Activated CD4-positive, alpha-beta memory T cell treated with anti-CD3 and anti-CD28 coated beads for 36 hours (primary cell): ENCODE measurements at regions of chr10 and their contacts with region 1.

Region 1: DNA sequence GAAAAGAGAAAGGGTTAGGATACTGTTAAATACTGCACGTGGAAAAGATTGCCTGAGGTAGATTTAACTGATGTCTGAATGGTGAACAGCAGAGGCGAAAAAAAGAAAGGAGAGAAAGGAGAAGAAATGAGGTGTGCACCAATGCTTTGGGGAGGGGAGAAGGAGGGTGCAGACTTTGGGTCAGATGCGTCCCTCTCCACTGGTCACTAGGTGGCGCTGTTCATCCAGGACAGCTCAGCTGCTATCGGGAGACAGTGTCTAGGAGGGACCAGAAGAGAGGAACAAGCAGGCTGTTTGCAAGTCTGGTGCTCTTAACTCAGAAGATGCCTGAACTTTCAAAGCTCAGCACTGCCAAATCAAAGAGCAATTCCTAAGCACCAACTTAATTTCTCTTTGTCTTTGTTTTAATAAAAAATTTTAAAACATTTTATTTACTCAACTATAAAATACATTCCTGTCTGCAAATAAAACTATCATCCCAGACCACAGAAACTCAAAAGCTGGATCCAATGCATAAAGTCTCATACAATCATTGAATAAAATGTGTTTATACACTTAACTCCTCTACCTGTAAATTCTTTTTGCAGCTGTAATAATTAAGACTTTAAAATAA is 83.9 kb upstream of the PDLIM1 start:
- DNase-seq: peak; percentile 81
- H3K4me3 Mint-ChIP-seq: no peak overlapping the region
- H3K27ac Mint-ChIP-seq: no peak overlapping the region
- H3K4me1 Mint-ChIP-seq: peaks cover 9% of the 10 kb centered on the region
- H3K27me3 Mint-ChIP-seq: peaks cover 14% of the 10 kb centered on the region

Region 2: DNA sequence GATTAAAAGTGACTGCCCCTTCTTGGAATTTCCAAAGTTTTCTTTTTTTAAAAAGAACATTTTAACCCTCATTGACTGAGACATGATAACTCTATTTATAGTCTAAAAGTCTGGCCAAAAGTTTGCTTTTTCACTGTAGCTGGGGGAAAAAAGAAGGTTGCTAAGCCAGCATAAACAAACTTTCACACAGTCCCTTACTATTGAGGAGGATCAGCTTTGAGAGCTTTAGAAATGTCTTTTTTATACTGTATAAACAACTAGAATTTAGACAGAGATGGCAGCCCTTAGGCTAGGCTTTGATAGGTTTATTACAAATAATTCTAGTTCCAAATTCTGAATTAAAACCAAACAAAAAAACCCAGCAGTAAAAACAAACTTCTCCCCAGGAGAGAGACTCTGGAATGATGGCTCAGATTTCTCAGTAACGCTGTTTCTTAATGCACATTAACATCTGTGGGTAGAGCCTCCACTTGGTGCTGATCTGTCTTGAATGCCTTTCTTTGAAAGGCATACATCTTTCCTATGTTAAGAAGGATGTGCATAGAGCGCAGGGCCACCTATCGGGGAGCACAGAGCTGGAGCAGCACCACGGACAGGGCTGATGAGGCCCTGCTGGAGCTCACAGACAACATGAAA is 17.0 kb after region 1 on chr10:
- CTCF ChIA-PET with region 1: interaction called, 33 read pairs
- POLR2A ChIA-PET with region 1: no interaction called
- intact Hi-C with region 1: no loop called
- DNase-seq: peak; percentile 24
- H3K4me3 Mint-ChIP-seq: no peak overlapping the region
- H3K27ac Mint-ChIP-seq: no peak overlapping the region
- H3K4me1 Mint-ChIP-seq: peaks cover 11% of the 10 kb centered on the region
- H3K27me3 Mint-ChIP-seq: no peaks in the 10 kb centered on the region

Region 3: DNA sequence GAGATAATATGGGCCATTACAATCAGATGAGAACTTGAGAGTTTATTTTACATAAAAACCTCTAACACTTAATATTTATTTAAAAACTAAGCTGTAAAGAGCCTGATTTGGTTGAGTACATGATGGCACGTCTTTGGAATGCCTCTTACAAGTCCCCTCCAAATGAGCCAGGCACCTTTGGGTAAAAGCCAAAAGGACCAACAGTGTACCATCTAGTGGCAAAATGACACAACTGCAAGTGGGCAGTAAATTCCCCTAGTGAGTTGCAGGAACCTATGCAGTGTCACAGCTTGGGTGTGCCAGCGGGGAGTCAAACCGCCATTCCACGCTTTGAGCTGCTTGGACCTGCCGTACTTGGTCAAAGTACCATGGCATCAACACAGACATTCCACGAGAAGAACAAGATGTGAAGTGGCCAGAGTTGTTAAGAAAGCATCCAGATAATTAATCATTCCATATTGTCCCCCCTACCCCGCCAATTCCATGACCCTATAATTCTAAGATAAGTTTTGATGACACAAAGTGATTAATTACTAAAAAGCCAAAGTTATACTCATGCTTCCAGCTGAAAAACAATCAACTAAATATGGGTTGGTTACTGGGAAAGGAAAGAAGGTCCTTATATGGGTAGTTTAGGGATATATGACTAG is 71.3 kb after region 1 on chr10:
- CTCF ChIA-PET with region 1: interaction called, 47 read pairs
- POLR2A ChIA-PET with region 1: no interaction called
- intact Hi-C with region 1: loop called (anchors 1 kb)
- DNase-seq: peak; percentile 34
- H3K4me3 Mint-ChIP-seq: no peak overlapping the region
- H3K27ac Mint-ChIP-seq: no peak overlapping the region
- H3K4me1 Mint-ChIP-seq: peaks cover 6% of the 10 kb centered on the region
- H3K27me3 Mint-ChIP-seq: peaks cover 5% of the 10 kb centered on the region